ENCODE measurements at regions of chr3 and their contacts with region 1.

Region 1: DNA sequence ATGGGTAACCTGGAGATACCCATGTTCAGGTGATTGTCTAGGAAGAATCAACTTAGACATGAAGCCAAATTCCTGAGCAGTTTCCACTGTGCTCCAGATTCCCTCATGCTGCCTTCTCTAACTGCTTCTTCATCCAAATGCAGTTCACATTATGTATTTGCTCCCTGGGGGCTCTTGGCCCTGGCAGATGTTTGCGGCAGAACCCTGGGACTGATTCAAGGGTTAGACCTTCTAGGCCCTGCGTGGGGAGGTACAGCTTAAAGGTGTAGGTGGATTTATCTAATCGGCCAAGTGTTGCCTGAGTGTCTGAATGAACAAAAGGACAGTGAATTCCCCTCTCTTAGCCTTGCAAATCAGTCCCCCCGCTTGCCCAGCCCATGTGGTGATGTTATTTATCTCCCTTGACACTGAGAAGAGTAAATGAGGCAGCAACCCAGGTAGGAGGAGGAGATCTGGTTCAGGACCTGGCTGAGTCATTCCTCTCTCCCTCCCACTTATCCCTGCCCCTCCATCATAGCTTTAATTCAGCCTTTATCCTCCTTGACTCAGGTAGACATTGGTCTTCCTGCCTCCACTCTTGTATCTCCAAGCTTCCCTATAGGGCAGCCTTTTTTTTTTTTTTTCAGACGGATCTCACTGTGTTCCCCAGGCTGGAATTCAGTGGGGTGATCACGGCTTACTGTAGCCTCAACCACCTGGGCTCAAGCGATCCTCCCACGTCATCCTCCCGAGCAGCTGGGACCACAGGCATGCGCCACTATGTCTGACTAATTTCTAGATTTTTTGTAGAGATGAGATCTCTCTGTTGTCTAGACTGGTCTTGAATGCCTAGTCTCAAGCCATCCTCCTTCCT is 54.8 kb downstream of the MAGEF1 start:
- DNase-seq: peak; percentile 60
- H3K4me3 Mint-ChIP-seq: no peak overlapping the region
- H3K27ac Mint-ChIP-seq: peak overlapping the region; percentile 66
- H3K4me1 Mint-ChIP-seq: peaks cover 16% of the 10 kb centered on the region
- H3K27me3 Mint-ChIP-seq: peaks cover 5% of the 10 kb centered on the region

Region 2: DNA sequence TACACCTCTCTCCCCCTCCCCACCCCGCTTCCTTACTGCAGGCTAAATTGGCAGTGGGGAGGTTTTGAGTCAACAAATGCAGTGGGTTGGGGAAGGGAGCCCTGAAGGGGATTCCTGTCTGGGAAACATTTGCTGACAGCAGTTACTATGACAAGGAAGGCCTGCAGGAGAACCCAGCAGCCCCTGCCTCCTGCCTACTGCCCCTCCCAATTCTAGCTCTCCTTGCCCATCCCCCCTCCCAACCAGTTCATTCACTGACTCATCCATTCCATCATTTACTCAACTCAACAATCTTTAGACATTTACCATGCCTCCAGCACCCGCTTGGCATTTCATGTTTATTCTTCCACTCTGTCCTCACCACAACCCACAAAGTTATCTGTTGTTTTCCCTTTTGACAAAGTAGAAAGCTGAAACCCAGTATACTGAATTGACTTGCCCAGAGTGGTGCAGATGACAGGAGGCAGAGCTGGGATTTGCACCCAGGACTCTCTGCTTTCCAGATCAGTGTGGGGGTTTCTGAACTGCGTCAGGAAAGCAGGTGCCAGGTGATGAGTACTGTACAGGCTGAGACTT is 20.2 kb before region 1 on chr3:
- intact Hi-C with region 1: loop called (anchors 1 kb)
- DNase-seq: peak; percentile 79
- H3K4me3 Mint-ChIP-seq: no peak overlapping the region
- H3K27ac Mint-ChIP-seq: no peak overlapping the region
- H3K4me1 Mint-ChIP-seq: peaks cover 5% of the 10 kb centered on the region
- H3K27me3 Mint-ChIP-seq: peaks cover 2% of the 10 kb centered on the region